ENCODE measurements at regions of chr19 and their contacts with region 1.

Region 1: GRCh38 chr19:9914315-9915207 is 21.8 kb downstream of the OLFM2 start:
- DNase-seq: peak; percentile 89 to 94 (median 90)
- ATAC-seq: peak; percentile 94
- H3K4me3 ChIP-seq: peak overlapping the region; percentile 53
- H3K27ac ChIP-seq: peak overlapping the region; percentile 66
- H3K4me1 ChIP-seq: peaks cover 6 to 20% of the 10 kb centered on the region in 2 experiments; a peak in 4 of 5 replicates
- H3K27me3 ChIP-seq: peaks cover 0 to 25% of the 10 kb centered on the region in 2 experiments; a peak in 3 of 5 replicates
- CTCF ChIP-seq: peak; percentile 67 to 96 (median 80)
- EP300 ChIP-seq: peak; percentile 42; the same call in 1 of the 2 replicates
- POLR2A ChIP-seq: no peak
- RAD21 ChIP-seq: peak; percentile 79 to 82

Region 2: GRCh38 chr19:9847087-9847671 is 67.4 kb before region 1 on chr19:
- CTCF ChIA-PET with region 1: interaction called, 16 read pairs
- POLR2A ChIA-PET with region 1: no interaction called
- in situ Hi-C with region 1: no loop called
- intact Hi-C with region 1: no loop called
- DNase-seq: peak; percentile 73 to 80 (median 77)
- ATAC-seq: peak; percentile 92
- H3K4me3 ChIP-seq: no peak overlapping the region
- H3K27ac ChIP-seq: no peak overlapping the region
- H3K4me1 ChIP-seq: peaks cover 0 to 36% of the 10 kb centered on the region in 2 experiments; a peak in 3 of 5 replicates
- H3K27me3 ChIP-seq: no peaks in the 10 kb centered on the region
- CTCF ChIP-seq: peak; percentile 70 to 78 (median 74)
- EP300 ChIP-seq: no peak
- POLR2A ChIP-seq: no peak
- RAD21 ChIP-seq: peak; percentile 19 to 62; a peak in 3 of 4 replicates